ENCODE measurements at regions of chr6 and their contacts with region 1.

Region 1: GRCh38 chr6:136037876-136038460 is 186.5 kb downstream of the PDE7B start:
- DNase-seq: peak; percentile 74
- ATAC-seq: peak; percentile 78

Region 2: DNA sequence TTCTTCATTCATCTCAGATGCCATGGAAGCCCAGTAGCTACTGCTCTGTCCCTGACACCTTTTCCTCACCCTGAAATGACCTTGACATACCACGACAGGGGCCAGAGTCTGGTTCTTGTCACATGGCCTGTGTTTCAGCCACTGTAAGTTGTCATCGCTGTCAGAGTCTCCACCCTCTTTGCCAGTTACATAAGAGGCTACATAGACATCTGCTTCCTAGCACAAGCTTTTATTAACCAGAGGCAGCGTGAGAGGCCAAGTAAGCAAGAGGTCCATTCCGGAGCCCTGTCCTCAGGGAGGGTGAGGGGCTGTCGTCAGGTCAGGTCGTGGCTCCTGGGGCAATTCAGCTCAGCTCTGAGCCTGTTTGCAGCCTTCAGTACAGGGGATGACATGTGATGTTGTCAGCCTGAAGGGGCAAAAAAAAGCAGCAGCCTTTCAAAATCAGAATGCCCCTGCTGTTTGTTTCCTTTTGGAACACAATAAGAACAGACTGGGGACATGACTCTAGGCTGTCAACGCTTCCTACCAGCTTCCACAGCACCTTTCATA is 65.9 kb after region 1 on chr6:
- intact Hi-C with region 1: loop called (anchors 10 kb)
- DNase-seq: peak; percentile 86
- ATAC-seq: peak; percentile 97

Region 3: GRCh38 chr6:136226027-136226673 is 188.2 kb after region 1 on chr6:
- intact Hi-C with region 1: loop called (anchors 5 kb)
- DNase-seq: peak; percentile 52
- ATAC-seq: peak; percentile 88

Measured in left ventricle myocardium superior (tissue), 1 donor.